Dendritic cell treated with granulocyte-macrophage colony-stimulating factor and Interleukin-4, amounts not matched to agents 40 ng/mL and 50 ng/mL, for 4 days (primary cell): ENCODE measurements at regions of chr11 and their contacts with region 1.

Region 1: DNA sequence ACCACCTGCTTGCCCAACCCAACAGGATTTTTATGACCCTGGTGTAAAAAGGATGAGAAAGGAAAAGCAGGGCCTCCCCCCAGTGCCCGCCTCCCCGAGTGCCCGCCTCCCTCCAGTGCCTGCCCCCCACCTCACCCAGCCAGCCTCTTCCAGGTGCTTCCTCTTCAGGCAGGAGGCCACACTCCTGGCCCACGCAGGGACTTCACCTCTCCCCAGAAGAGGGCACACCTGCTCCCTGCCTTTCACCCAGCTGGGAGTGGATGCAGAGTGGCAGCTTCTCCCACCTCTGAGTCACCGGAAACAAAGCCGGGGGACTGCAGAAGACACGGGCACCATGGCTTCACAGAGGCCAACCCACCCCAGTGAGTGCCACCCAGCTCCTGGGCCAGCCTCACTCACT is 16.1 kb downstream of the CPT1A start:
- H3K4me3 Mint-ChIP-seq: no peak overlapping the region
- H3K27ac Mint-ChIP-seq: peak overlapping the region; percentile 68
- H3K4me1 Mint-ChIP-seq: peaks cover 57% of the 10 kb centered on the region
- H3K27me3 Mint-ChIP-seq: no peaks in the 10 kb centered on the region

Region 2: DNA sequence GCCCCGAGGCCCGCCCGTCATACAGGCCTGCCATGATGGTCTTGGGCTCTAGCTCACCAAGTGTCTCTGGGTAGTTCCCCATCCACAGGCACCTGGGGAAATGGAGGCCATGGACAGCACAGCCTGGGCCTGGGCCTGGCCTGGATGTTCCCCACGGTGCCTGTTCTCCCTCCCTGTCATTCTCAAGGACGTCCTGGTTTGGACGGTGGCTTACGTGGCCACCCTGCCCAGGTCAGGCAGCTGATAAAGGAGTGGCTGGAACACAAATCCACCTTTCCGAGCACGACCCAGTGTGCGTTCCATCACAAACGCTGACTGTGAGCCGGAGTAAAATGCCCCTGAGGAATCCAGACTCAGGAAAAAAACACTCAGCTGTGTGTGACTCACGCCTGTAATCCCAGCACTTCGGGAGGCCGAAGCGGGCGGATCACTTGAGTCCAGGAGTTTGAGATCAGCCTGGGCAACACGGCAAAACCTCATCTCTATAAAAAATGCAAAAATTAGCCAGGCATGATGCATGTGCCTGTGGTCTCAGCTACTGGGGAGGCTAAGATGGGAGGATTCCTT is 33.1 kb before region 1 on chr11:
- intact Hi-C with region 1: loop called (anchors 5 kb)
- H3K4me3 Mint-ChIP-seq: no peak overlapping the region
- H3K27ac Mint-ChIP-seq: peak overlapping the region; percentile 61
- H3K4me1 Mint-ChIP-seq: peaks cover 12% of the 10 kb centered on the region
- H3K27me3 Mint-ChIP-seq: no peaks in the 10 kb centered on the region

Region 3: DNA sequence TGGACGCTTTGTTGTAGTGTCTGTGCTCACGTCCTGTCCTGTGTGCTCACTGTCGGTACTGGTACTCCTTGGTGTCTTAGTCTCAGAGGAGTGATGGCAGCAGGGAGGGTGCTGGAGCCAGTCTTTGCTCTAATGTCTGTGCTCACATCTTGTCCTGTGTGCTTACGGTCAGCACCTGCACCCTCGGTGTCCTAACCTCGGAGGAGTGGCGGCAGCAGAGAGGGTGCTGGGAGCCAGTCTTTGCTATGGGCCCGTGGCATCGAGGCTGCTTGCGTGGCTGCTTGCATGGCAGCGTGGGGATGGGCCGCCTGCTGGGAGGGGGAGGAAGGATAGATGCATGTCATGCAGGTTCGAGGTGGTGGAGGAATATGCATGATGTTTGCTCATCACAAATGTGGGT is 90.9 kb after region 1 on chr11:
- intact Hi-C with region 1: no loop called
- H3K4me3 Mint-ChIP-seq: no peak overlapping the region
- H3K27ac Mint-ChIP-seq: no peak overlapping the region
- H3K4me1 Mint-ChIP-seq: no peaks in the 10 kb centered on the region
- H3K27me3 Mint-ChIP-seq: no peaks in the 10 kb centered on the region